Panc1 (cell line): ENCODE measurements at regions of chr3 and their contacts with region 1.

Region 1: DNA sequence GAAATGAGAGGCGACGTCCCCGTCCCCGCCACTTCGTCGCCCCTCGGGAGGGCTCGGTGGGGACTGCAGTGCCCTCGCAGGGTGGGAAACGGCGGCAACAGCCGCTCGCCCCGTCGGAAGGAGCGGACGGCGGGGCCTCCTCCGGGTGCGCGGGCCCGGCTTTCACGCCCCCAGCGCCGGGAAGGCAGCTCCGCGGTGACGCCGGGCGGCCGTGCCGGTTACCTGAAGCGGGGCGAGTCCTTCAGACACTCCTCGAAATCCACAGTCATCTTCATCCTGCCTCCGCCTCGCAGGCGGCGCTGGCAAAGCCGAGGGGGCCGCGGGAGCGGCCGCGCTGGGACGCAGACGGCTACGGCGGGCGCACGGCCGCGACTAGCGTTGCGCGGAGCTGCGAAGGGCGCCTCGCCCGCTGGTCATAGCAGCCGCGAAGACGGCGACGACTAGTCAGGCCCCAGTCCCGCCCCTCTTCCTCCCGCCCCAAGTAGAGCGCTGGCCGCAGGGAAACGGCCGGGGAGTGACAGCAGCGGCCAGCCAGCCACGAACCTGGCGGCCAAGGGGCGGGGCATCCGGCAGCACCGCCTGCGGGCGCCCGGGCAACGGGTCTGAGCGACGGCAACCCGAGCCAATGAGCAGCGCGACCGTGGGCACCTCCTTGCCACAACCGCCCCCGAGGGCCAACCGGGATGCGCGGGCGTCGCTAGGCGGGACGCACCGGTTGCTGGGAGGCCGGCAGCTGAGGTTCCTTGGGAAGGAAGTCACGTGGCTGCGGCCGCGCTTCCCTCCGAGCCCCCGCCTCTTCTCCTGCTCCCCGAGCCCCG is at the start of gene ACAP2:
- DNase-seq: peak; percentile 93
- ATAC-seq: peak; percentile 97
- H3K4me3 ChIP-seq: peak within 1 kb of the TSS; percentile 74 to 80
- H3K27ac ChIP-seq: peak within 1 kb of the TSS; percentile 96
- H3K4me1 ChIP-seq: peaks cover 23% of the 10 kb centered on the region
- H3K27me3 ChIP-seq: no peaks in the 10 kb centered on the region
- CTCF ChIP-seq: no peak
- total RNA-seq, gene ACAP2: 57.9 TPM

Region 2: GRCh38 chr3:195385526-195385925 is 57.3 kb before region 1 on chr3:
- CTCF ChIA-PET with region 1: no interaction called
- POLR2A ChIA-PET with region 1: interaction called, 15 read pairs
- in situ Hi-C with region 1: no loop called
- intact Hi-C with region 1: no loop called
- DNase-seq: no peak
- ATAC-seq: no peak
- H3K4me3 ChIP-seq: no peak overlapping the region
- H3K27ac ChIP-seq: no peak overlapping the region
- H3K4me1 ChIP-seq: peaks cover 9% of the 10 kb centered on the region
- H3K27me3 ChIP-seq: no peaks in the 10 kb centered on the region
- CTCF ChIP-seq: no peak

Region 3: DNA sequence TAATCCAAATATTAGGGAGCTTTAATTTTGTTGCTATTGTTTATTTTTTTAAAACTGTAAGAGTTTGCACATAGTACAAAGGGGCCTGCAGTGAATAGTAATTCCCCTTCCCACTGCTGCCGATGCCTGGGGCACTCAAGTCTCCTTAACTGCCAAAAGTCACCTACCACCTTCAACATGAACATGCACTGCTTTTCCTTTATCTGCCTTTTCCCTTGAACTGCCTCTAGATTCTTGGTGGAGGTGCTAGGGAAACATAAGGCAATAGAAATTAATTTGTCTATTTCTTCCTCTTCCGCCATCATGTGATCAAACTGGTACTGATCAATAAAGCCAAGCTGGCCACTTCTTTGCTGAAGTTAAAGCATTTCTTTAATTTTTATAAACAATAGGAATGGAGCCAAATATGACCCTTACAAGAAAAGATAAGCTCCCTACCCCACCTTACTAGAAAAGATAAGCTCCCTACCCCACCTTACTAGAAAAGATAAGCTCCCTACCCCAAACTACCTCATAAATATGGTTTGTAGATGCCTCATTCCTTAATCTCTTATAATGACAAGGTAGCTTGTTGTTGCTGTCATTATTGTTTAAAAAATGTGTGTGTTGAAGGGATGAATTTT is 17.4 kb after region 1 on chr3:
- CTCF ChIA-PET with region 1: no interaction called
- POLR2A ChIA-PET with region 1: interaction called, 10 read pairs
- in situ Hi-C with region 1: no loop called
- intact Hi-C with region 1: no loop called
- DNase-seq: no peak
- ATAC-seq: no peak
- H3K4me3 ChIP-seq: no peak overlapping the region
- H3K27ac ChIP-seq: no peak overlapping the region
- H3K4me1 ChIP-seq: no peaks in the 10 kb centered on the region
- H3K27me3 ChIP-seq: no peaks in the 10 kb centered on the region
- CTCF ChIP-seq: no peak